ENCODE measurements at regions of chr3 and their contacts with region 1.

Region 1: DNA sequence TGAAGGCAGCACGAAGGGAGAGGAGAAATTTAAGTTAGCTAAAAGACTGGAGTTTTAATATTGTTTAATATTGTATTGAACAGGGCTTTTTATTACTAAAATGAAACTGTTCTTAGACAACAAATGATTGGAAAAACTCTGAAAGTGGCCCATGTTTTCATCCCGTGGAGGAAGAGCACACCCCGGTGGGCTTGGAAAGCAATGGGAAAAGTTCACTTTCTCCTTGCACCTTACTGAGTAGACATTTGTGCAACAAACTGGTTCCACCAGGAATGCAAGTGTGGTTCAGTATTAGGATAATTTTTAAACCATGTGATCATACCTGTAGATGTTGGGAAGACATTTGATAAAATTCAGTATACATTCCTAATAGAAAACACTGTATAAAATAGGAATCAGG is 8.2 kb upstream of the ESYT3 start:
- DNase-seq: no peak
- ATAC-seq: no peak
- H3K4me3 ChIP-seq: no peak overlapping the region
- H3K27ac ChIP-seq: no peak overlapping the region
- H3K4me1 ChIP-seq: no peaks in the 10 kb centered on the region
- H3K27me3 ChIP-seq: peaks cover 0 to under 1% (median 0%) of the 10 kb centered on the region in 9 donors
- CTCF ChIP-seq: peak; percentile 16 to 62 (median 48)
- POLR2A ChIP-seq: no peak

Region 2: GRCh38 chr3:138068579-138069174 is 357.5 kb before region 1 on chr3:
- intact Hi-C with region 1: loop called in 1 of 10 experiments (anchors 10 kb)
- DNase-seq: peak; percentile 75 to 89 (median 81)
- ATAC-seq: peak; percentile 44 to 95 (median 91)
- H3K4me3 ChIP-seq: no peak overlapping the region
- H3K27ac ChIP-seq: no peak overlapping the region
- H3K4me1 ChIP-seq: no peaks in the 10 kb centered on the region
- H3K27me3 ChIP-seq: no peaks in the 10 kb centered on the region
- CTCF ChIP-seq: peak; percentile 91 to 99 (median 98)
- POLR2A ChIP-seq: no peak

Region 3: GRCh38 chr3:138186803-138187295 is 239.4 kb before region 1 on chr3:
- intact Hi-C with region 1: loop called in 1 of 10 experiments (anchors 10 kb)
- DNase-seq: peak; percentile 88 to 94 (median 92)
- ATAC-seq: peak; percentile 95 to 99 (median 97)
- H3K4me3 ChIP-seq: peak overlapping the region; percentile 62 to 96 (median 78)
- H3K27ac ChIP-seq: peak overlapping the region; percentile 83 to 99 (median 93)
- H3K4me1 ChIP-seq: peaks cover 0 to 35% (median 24%) of the 10 kb centered on the region in 12 donors
- H3K27me3 ChIP-seq: peaks cover 0 to 7% (median 0%) of the 10 kb centered on the region in 9 donors
- CTCF ChIP-seq: no peak
- POLR2A ChIP-seq: no peak

Region 4: DNA sequence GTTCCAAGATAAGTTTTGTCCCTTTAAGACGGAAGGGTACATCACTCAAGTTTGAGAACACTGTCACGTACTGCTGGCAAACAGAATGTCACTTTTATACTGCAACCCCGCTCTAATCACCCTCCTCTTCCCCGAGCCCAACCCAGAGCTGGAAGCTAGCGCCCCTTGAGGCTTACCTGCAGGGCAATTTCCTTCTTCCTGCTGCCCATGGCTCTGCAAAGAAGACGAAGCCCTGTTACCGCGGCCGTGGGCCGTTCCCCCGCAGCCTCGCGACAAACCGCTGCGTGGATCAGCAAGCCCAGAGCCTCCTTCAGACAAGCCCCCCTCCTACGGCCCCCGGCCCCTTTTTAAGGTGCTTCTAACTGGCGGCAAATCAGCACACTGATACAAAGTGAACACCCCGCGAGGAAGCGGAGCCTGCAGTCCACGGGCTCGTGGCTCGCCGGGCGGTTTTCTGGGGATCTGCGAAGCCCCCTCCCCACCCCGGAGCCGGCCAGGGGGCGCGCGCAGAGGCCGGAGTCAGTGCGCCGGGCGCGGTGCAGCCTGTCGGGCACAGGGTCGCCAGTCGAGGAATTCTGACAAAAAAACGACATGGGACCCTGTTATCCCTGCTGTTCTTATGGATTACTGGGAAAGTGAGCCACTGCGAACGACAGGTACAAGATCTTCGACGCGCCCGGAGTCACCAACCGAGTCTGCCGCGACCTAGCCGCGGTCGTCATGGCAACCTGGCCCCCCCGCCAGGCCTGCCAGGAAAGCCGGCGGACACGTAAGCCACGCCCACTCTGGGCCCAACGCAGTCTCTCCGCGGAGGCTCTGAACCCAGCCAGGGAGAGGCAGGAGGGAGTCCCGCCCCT is 96.9 kb before region 1 on chr3 and contains the start of gene NME9:
- intact Hi-C with region 1: loop called in 2 of 10 experiments (anchors 1 to 5 kb)
- DNase-seq: peak; percentile 89 to 94 (median 92)
- ATAC-seq: peak; percentile 94 to 98 (median 96)
- H3K4me3 ChIP-seq: peak within 1 kb of the TSS; percentile 47 to 72 (median 66)
- H3K27ac ChIP-seq: peak within 1 kb of the TSS in 9 of 12 donors; percentile 16 to 69 (median 53)
- H3K4me1 ChIP-seq: peaks cover 0 to 18% (median 9%) of the 10 kb centered on the region in 12 donors
- H3K27me3 ChIP-seq: no peaks in the 10 kb centered on the region
- CTCF ChIP-seq: peak; percentile 17 to 62 (median 42)
- POLR2A ChIP-seq: no peak
- total RNA-seq, gene NME9: not detected

Region 5: DNA sequence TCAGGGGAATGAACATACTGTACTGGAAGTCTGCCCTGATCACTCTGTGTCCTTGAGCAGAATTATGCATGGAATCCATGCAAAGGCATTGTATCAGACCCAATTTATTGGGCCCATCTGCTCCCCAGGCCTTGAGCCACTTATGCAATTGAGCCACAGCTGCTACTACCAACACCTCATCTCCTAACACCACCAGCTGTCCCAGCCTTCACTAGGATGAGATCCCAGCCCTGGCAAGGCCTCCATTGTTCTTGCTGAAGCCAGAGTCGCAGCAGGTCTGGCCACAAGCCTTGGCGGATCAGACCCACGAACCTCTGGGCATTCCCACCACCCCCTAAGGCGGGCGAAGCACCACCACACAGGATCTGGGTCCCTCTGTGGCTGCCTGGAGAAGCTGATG is 87.4 kb before region 1 on chr3:
- intact Hi-C with region 1: loop called in 2 of 10 experiments (anchors 5 kb)
- DNase-seq: no peak
- ATAC-seq: peak; percentile 31 to 39 (median 36)
- H3K4me3 ChIP-seq: no peak overlapping the region
- H3K27ac ChIP-seq: no peak overlapping the region
- H3K4me1 ChIP-seq: peaks cover 0 to 12% (median 0%) of the 10 kb centered on the region in 12 donors
- H3K27me3 ChIP-seq: no peaks in the 10 kb centered on the region
- CTCF ChIP-seq: no peak
- POLR2A ChIP-seq: no peak

Region 6: DNA sequence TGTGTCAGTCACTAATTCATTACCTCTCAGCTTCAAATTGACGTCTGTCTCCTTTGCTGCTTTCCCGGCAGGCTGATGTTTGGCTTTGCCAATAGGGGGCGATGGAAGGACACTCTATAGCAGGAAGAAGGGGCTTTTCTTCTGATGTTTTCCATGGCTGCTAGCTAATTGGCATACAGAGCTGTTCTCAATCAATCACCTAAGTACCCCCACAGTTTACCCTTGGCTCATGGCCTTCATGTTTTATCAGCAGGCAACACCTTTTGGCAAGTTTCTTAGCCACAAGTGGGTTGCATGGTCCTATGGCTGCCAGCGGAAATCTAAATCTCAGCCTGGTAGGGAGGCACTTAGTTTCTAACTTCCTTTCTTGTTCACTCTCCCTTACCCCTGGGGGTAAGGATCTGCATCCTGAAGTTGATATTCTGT is 53.2 kb after region 1 on chr3:
- intact Hi-C with region 1: loop called in 1 of 10 experiments (anchors 5 kb)
- DNase-seq: no peak
- ATAC-seq: peak in 3 of 4 donors; percentile 32 to 67 (median 45)
- H3K4me3 ChIP-seq: no peak overlapping the region
- H3K27ac ChIP-seq: no peak overlapping the region
- H3K4me1 ChIP-seq: peaks cover 0 to 4% (median 0%) of the 10 kb centered on the region in 12 donors
- H3K27me3 ChIP-seq: no peaks in the 10 kb centered on the region
- CTCF ChIP-seq: peak; percentile 28 to 67 (median 56)
- POLR2A ChIP-seq: no peak

Measured in heart left ventricle (tissue), 16 donors.